ENCODE measurements at regions of chr6 and their contacts with region 1.

Region 1: DNA sequence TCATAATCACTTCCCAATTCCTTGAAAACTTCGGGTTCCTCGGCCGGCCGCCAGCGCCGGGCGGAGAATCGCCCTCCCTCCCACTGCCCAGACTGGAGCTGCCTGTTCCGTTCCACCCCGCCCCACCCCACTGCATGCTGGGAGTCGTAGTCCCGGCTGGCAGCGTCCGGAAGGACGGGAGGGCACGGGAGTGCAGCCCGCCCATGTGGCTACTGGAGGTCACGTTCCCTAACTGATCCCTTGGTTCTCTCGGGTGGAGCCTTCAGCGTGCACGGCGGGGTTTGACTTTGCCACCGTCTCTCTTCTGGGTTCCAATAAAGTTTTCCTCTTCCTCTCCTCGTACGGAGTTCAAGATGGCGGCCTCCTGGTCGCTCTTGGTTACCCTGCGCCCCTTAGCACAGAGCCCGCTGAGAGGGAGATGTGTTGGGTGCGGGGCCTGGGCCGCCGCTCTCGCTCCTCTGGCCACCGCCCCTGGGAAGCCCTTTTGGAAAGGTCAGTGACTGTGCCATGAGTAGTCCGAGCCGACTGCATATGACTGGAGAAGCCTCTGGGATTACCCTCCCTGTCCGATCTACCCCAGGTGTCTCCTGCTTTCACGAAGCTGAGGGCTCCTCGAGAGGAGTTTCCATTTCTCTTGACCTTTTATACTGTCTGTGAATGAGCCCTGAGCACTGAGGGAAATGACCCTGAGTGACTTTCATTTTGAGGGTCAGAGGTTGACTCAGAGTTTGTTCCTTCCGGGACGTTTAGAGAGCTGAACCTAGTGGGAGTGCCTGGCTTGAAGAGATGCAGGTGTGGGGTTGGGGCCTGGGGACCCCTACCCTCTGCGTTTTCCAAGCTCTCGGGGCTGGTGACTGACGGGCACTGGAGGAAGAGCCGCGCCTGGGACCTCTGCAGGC is at the start of gene AFG1L:
- DNase-seq: peak; percentile 81 to 90 (median 88)
- ATAC-seq: peak; percentile 96
- H3K4me3 ChIP-seq: peak within 1 kb of the TSS; percentile 99
- H3K4me3 Mint-ChIP-seq: peak within 1 kb of the TSS; percentile 93 to 99 (median 98)
- H3K27ac ChIP-seq: peak within 1 kb of the TSS; percentile 88
- H3K27ac Mint-ChIP-seq: peak within 1 kb of the TSS; percentile 95 to 100 (median 99)
- H3K4me1 ChIP-seq: peaks cover 10 to 13% of the 10 kb centered on the region in 2 donors
- H3K4me1 Mint-ChIP-seq: peaks cover 11 to 37% (median 26%) of the 10 kb centered on the region in 7 donors
- H3K27me3 ChIP-seq: no peaks in the 10 kb centered on the region
- H3K27me3 Mint-ChIP-seq: peaks cover 0 to 3% (median 0%) of the 10 kb centered on the region in 5 donors
- total RNA-seq, gene AFG1L: 4.1 to 9.2 (median 7.2) TPM

Region 2: GRCh38 chr6:107459283-107460082 is 835.5 kb before region 1 on chr6 and contains the start of gene PDSS2:
- CTCF ChIA-PET with region 1: no interaction called
- POLR2A ChIA-PET with region 1: no interaction called
- intact Hi-C with region 1: loop called in 1 of 2 experiments (anchors 1 kb)
- DNase-seq: peak; percentile 83 to 98 (median 95)
- ATAC-seq: peak; percentile 100
- H3K4me3 ChIP-seq: peak within 1 kb of the TSS; percentile 95
- H3K4me3 Mint-ChIP-seq: peak within 1 kb of the TSS; percentile 87 to 99 (median 96)
- H3K27ac ChIP-seq: peak within 1 kb of the TSS; percentile 75
- H3K27ac Mint-ChIP-seq: peak within 1 kb of the TSS; percentile 92 to 99 (median 96)
- H3K4me1 ChIP-seq: peaks cover 5% of the 10 kb centered on the region in 2 donors
- H3K4me1 Mint-ChIP-seq: peaks cover 10 to 41% (median 36%) of the 10 kb centered on the region in 7 donors
- H3K27me3 ChIP-seq: no peaks in the 10 kb centered on the region
- H3K27me3 Mint-ChIP-seq: peaks cover 0 to 7% (median 0%) of the 10 kb centered on the region in 5 donors
- total RNA-seq, gene PDSS2: 12.0 to 15.3 (median 12.1) TPM

Region 3: GRCh38 chr6:108321253-108321740 is 26.3 kb after region 1 on chr6:
- CTCF ChIA-PET with region 1: no interaction called
- POLR2A ChIA-PET with region 1: no interaction called
- intact Hi-C with region 1: no loop called
- DNase-seq: no peak
- ATAC-seq: no peak
- H3K4me3 ChIP-seq: no peak overlapping the region
- H3K4me3 Mint-ChIP-seq: no peak overlapping the region
- H3K27ac ChIP-seq: no peak overlapping the region
- H3K27ac Mint-ChIP-seq: no peak overlapping the region
- H3K4me1 ChIP-seq: no peaks in the 10 kb centered on the region
- H3K4me1 Mint-ChIP-seq: no peaks in the 10 kb centered on the region
- H3K27me3 ChIP-seq: no peaks in the 10 kb centered on the region
- H3K27me3 Mint-ChIP-seq: no peaks in the 10 kb centered on the region

Region 4: DNA sequence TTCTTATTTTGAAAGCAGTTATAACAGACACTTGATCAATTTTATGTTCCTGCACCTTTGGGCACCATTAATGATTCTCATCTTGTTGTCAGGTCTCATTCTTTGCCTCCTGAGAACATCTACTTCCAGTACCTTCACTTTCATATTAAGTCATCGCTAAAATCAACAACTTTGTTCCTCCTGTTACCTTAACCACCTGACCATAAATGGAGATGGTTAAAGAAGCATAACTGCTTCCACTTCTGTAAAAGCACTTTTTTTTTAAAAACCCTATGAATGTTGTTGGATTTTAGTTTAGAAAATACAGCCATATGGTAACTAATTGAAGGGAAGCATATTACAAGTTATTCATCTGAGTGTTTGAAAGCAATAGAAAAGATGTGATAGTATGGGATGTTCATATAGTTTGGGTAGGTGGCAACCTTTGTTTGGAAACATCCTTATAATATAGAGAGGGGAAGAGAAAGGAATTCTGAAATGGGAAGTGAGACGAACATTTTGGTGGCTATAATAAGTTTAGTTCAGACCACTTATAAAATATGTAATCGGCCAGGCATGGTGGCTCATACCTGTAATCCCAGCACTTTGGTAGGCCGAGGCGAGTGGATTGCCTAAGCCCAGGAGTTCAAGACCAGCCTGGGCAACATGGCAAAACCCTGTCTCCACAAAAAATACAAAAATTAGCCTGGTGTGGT is 53.8 kb after region 1 on chr6:
- CTCF ChIA-PET with region 1: no interaction called
- POLR2A ChIA-PET with region 1: no interaction called
- intact Hi-C with region 1: loop called in 1 of 2 experiments (anchors 1 kb)
- DNase-seq: peak in 1 of 9 donors; percentile 2
- ATAC-seq: peak; percentile 22
- H3K4me3 ChIP-seq: no peak overlapping the region
- H3K4me3 Mint-ChIP-seq: peak overlapping the region in 1 of 10 donors; percentile 70
- H3K27ac ChIP-seq: no peak overlapping the region
- H3K27ac Mint-ChIP-seq: peak overlapping the region in 5 of 9 donors; percentile 10 to 89 (median 24)
- H3K4me1 ChIP-seq: no peaks in the 10 kb centered on the region
- H3K4me1 Mint-ChIP-seq: peaks cover 5 to 19% (median 8%) of the 10 kb centered on the region in 7 donors
- H3K27me3 ChIP-seq: no peaks in the 10 kb centered on the region
- H3K27me3 Mint-ChIP-seq: no peaks in the 10 kb centered on the region

Region 5: DNA sequence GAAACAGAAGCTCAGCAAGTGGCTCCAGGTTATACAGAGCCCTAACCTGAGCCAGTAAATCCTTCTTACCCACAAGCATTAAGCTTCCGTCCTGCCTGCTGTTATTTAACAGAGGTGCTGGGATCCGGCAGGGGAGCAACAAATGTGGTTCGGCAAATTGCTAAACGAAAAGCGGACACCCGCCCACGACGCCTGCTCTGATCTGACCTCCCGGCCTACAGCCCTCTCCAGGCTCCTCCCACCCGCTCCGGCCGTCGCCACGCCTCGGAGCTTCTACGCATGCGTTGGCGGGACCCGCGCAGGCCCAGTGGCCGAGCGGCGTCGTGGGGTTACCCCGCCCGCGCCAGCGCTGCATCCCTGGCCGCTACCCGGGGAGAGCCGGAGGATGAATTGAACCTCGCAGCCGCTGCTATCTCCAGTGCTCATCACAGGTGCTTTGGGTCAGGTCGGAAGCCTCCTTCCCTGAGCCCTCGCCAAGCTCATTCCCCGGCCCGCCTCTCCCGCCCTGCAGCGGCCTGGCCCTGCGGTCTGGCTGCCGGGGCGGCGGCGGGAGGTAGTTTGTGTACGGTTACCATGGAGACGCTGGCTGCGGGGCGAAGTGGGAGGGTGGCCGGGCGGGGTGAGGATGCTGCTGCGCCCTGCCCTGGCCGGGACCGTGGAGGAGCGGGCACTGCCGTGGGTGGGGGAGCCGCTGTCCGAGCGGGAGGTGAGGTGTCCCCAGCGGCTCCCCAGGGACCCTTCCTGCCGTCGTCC is 553.3 kb after region 1 on chr6 and contains the start of gene ARMC2:
- CTCF ChIA-PET with region 1: no interaction called
- POLR2A ChIA-PET with region 1: no interaction called
- intact Hi-C with region 1: loop called in 1 of 2 experiments (anchors 10 kb)
- DNase-seq: peak; percentile 72 to 95 (median 79)
- ATAC-seq: peak; percentile 94
- H3K4me3 ChIP-seq: peak within 1 kb of the TSS; percentile 90
- H3K4me3 Mint-ChIP-seq: peak within 1 kb of the TSS; percentile 75 to 93 (median 88)
- H3K27ac ChIP-seq: peak within 1 kb of the TSS; percentile 69
- H3K27ac Mint-ChIP-seq: peak within 1 kb of the TSS; percentile 72 to 93 (median 85)
- H3K4me1 ChIP-seq: peaks cover 6 to 13% of the 10 kb centered on the region in 2 donors
- H3K4me1 Mint-ChIP-seq: peaks cover 11 to 39% (median 29%) of the 10 kb centered on the region in 7 donors
- H3K27me3 ChIP-seq: no peaks in the 10 kb centered on the region
- H3K27me3 Mint-ChIP-seq: peaks cover 0 to 36% (median 0%) of the 10 kb centered on the region in 5 donors
- total RNA-seq, gene ARMC2: 6.2 to 12.7 (median 7.9) TPM

Region 6: DNA sequence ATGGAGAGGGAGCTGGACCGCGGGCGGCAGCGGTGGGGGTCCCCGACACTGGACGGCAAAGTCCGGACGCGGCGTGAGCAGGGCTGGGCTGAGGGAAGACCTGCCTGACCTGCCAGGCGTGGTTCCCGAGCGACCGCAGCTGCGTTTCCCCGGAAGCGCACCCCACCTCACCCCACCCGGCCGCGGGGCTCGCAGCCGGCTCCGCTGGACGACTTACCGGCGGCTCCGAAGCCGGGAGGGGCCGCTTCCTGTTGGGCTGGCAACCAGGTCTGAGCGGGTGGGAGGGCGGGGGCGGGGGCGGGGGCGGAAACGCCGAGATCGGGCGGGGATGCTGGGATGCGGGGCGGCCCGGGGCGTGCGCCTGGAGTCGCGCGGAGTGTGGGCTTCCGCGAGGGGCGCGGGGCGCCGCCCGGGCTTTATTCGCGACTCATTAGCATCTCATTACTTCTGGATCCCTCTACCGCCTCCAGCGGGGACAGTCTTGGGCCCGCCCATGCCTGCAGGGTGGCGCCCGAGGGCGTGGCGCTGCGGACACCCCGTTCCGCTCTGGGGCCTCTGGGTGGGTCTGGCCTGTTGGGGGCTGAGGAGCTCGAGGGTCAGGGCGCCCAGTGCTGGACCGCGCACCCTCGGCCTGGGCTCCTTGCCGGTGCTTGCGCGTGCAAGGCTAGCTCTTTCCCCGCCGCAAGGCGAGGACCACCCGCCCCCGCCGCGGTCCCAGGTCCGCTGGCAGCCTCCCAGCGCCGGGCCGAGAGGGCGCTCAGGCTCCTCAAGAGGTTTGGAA is 1160.7 kb after region 1 on chr6 and contains the start of gene MICAL1:
- CTCF ChIA-PET with region 1: no interaction called
- POLR2A ChIA-PET with region 1: no interaction called
- intact Hi-C with region 1: loop called in 1 of 2 experiments (anchors 5 kb)
- DNase-seq: peak; percentile 55 to 79 (median 72)
- ATAC-seq: peak; percentile 82
- H3K4me3 ChIP-seq: peak within 1 kb of the TSS; percentile 81
- H3K4me3 Mint-ChIP-seq: peak within 1 kb of the TSS; percentile 95 to 99 (median 97)
- H3K27ac ChIP-seq: peak within 1 kb of the TSS; percentile 94
- H3K27ac Mint-ChIP-seq: peak within 1 kb of the TSS; percentile 83 to 99 (median 97)
- H3K4me1 ChIP-seq: peaks cover 40 to 45% of the 10 kb centered on the region in 2 donors
- H3K4me1 Mint-ChIP-seq: peaks cover 29 to 68% (median 62%) of the 10 kb centered on the region in 7 donors
- H3K27me3 ChIP-seq: no peaks in the 10 kb centered on the region
- H3K27me3 Mint-ChIP-seq: no peaks in the 10 kb centered on the region
- total RNA-seq, gene MICAL1: 61.4 to 125 (median 78.7) TPM

Measured in naive thymus-derived CD4-positive, alpha-beta T cell (primary cell).